T-cell (primary cell): ENCODE measurements at regions of chr11 and their contacts with region 1.

Region 1: GRCh38 chr11:73177778-73178577 is 35.9 kb upstream of the FCHSD2 start:
- DNase-seq: peak; percentile 51 to 86 (median 75)
- ATAC-seq: peak; percentile 92 to 100 (median 98)
- H3K4me3 ChIP-seq: no peak overlapping the region
- H3K4me3 Mint-ChIP-seq: no peak overlapping the region
- H3K27ac ChIP-seq: no peak overlapping the region
- H3K27ac Mint-ChIP-seq: no peak overlapping the region
- H3K4me1 ChIP-seq: peaks cover 0 to 9% of the 10 kb centered on the region in 2 experiments
- H3K4me1 Mint-ChIP-seq: peaks cover 6 to 13% (median 12%) of the 10 kb centered on the region in 3 donors
- H3K27me3 ChIP-seq: peaks cover 0 to 13% of the 10 kb centered on the region in 2 experiments
- H3K27me3 Mint-ChIP-seq: peaks cover 0 to 3% of the 10 kb centered on the region in 2 donors

Region 2: GRCh38 chr11:72831513-72832300 is 346.3 kb before region 1 on chr11:
- CTCF ChIA-PET with region 1: interaction called in 1 of 2 experiments, 24 read pairs
- POLR2A ChIA-PET with region 1: no interaction called
- DNase-seq: peak in 30 of 35 experiments; percentile 25 to 70 (median 48)
- ATAC-seq: peak; percentile 66 to 78 (median 68)
- H3K4me3 ChIP-seq: no peak overlapping the region
- H3K4me3 Mint-ChIP-seq: no peak overlapping the region
- H3K27ac ChIP-seq: no peak overlapping the region
- H3K27ac Mint-ChIP-seq: peak overlapping the region; percentile 55 to 73
- H3K4me1 ChIP-seq: peaks cover 0 to 15% of the 10 kb centered on the region in 2 experiments
- H3K4me1 Mint-ChIP-seq: peaks cover 0 to 21% (median 8%) of the 10 kb centered on the region in 3 donors
- H3K27me3 ChIP-seq: no peaks in the 10 kb centered on the region
- H3K27me3 Mint-ChIP-seq: no peaks in the 10 kb centered on the region

Region 3: DNA sequence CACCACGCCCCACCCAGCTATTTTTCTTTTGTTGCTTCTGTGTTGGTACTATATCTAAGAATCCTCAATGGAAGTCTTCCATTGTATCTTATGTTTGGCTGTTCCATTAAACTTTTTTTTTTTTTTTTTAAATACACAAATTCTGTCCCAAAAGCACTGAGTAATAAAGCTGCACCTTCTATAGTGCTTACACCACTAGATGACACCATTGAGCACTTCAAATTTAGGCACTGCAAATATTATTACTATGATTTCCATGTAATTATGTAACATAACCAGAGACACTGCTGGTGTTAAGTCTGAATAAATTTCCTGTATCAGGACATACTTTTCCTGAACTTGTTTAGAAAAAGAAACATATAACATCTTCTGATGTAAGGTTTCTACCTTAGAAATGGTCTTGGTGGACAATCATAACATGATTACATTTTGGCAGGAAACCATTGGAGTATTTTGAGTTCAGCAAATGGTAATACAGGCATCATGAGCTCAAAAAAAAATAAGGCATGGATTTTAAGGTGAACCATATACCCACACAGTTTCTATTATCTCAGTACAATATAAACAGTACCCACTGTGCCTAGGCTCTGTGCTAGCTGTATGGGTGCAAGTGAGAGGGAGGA is 253.3 kb before region 1 on chr11:
- CTCF ChIA-PET with region 1: interaction called, 6 to 19 read pairs
- POLR2A ChIA-PET with region 1: no interaction called
- DNase-seq: peak in 1 of 35 experiments; percentile 56
- ATAC-seq: no peak
- H3K4me3 ChIP-seq: no peak overlapping the region
- H3K4me3 Mint-ChIP-seq: no peak overlapping the region
- H3K27ac ChIP-seq: no peak overlapping the region
- H3K27ac Mint-ChIP-seq: peak overlapping the region in 1 of 2 donors; percentile 75
- H3K4me1 ChIP-seq: no peaks in the 10 kb centered on the region
- H3K4me1 Mint-ChIP-seq: peaks cover 8 to 10% (median 8%) of the 10 kb centered on the region in 3 donors
- H3K27me3 ChIP-seq: no peaks in the 10 kb centered on the region
- H3K27me3 Mint-ChIP-seq: no peaks in the 10 kb centered on the region

Region 4: DNA sequence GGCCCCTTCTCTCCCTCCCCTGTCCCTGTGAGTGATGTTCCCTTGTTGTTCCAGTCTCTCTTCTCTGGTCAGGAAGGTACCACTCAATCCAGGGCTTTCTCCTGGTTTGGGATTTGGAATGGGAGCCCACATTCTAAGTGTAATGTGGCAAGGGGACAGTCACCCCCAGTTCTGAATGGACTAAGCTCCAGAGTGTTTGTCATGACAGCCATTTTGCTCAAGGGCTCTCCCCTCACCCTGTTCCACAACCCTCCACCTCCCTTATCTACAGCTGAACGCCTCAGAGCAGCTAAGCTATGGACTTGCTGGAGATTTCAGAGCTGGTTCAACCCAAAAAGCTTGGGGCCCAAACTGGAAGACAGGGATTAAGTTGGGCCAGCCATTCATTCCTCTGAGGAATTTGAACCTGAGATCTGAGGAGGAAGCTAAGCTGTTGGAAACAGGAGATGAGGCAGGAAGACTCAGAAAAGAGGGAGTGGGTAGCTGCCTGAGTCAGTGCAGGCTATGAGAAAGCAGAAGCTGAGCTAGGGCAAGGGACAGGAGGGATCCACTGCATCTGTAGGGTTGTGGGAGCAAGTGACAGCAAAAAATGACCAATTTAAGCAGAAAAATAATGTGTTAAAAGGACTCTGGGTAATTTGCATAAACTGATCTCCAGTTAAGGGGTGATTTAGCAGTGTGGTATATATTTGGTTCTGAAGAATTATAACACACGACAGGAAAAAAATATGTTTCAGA is 13.0 kb before region 1 on chr11:
- CTCF ChIA-PET with region 1: no interaction called
- POLR2A ChIA-PET with region 1: no interaction called
- DNase-seq: no peak
- ATAC-seq: no peak
- H3K4me3 ChIP-seq: no peak overlapping the region
- H3K4me3 Mint-ChIP-seq: no peak overlapping the region
- H3K27ac ChIP-seq: no peak overlapping the region
- H3K27ac Mint-ChIP-seq: no peak overlapping the region
- H3K4me1 ChIP-seq: no peaks in the 10 kb centered on the region
- H3K4me1 Mint-ChIP-seq: peaks cover 0 to 4% (median 0%) of the 10 kb centered on the region in 3 donors
- H3K27me3 ChIP-seq: peaks cover 0 to 3% of the 10 kb centered on the region in 2 experiments
- H3K27me3 Mint-ChIP-seq: peaks cover 0 to 2% of the 10 kb centered on the region in 2 donors